ENCODE measurements at regions of chr14 and their contacts with region 1.

Region 1: GRCh38 chr14:61444215-61444768 is 122.9 kb downstream of the PRKCH start:
- DNase-seq: no peak
- ATAC-seq: peak; percentile 84
- H3K4me3 Mint-ChIP-seq: no peak overlapping the region
- H3K27ac Mint-ChIP-seq: no peak overlapping the region
- H3K4me1 Mint-ChIP-seq: peaks cover 23% of the 10 kb centered on the region
- H3K27me3 Mint-ChIP-seq: no peaks in the 10 kb centered on the region
- CTCF ChIP-seq: no peak

Region 2: GRCh38 chr14:61280526-61281185 is 163.6 kb before region 1 on chr14:
- CTCF ChIA-PET with region 1: no interaction called
- POLR2A ChIA-PET with region 1: no interaction called
- intact Hi-C with region 1: no loop called
- DNase-seq: peak; percentile 39
- ATAC-seq: peak; percentile 73
- H3K4me3 Mint-ChIP-seq: peak overlapping the region; percentile 80
- H3K27ac Mint-ChIP-seq: no peak overlapping the region
- H3K4me1 Mint-ChIP-seq: peaks cover 13% of the 10 kb centered on the region
- H3K27me3 Mint-ChIP-seq: peaks cover 42% of the 10 kb centered on the region
- CTCF ChIP-seq: no peak

Region 3: GRCh38 chr14:61296719-61297502 is 147.4 kb before region 1 on chr14:
- CTCF ChIA-PET with region 1: no interaction called
- POLR2A ChIA-PET with region 1: interaction called, 3 read pairs
- intact Hi-C with region 1: loop called (anchors 5 kb)
- DNase-seq: no peak
- ATAC-seq: no peak
- H3K4me3 Mint-ChIP-seq: no peak overlapping the region
- H3K27ac Mint-ChIP-seq: no peak overlapping the region
- H3K4me1 Mint-ChIP-seq: no peaks in the 10 kb centered on the region
- H3K27me3 Mint-ChIP-seq: no peaks in the 10 kb centered on the region
- CTCF ChIP-seq: no peak

Region 4: GRCh38 chr14:61342486-61342885 is 101.8 kb before region 1 on chr14:
- CTCF ChIA-PET with region 1: no interaction called
- POLR2A ChIA-PET with region 1: no interaction called
- intact Hi-C with region 1: no loop called
- DNase-seq: no peak
- ATAC-seq: peak; percentile 10
- H3K4me3 Mint-ChIP-seq: no peak overlapping the region
- H3K27ac Mint-ChIP-seq: no peak overlapping the region
- H3K4me1 Mint-ChIP-seq: peaks cover 21% of the 10 kb centered on the region
- H3K27me3 Mint-ChIP-seq: peaks cover 3% of the 10 kb centered on the region
- CTCF ChIP-seq: no peak

Region 5: DNA sequence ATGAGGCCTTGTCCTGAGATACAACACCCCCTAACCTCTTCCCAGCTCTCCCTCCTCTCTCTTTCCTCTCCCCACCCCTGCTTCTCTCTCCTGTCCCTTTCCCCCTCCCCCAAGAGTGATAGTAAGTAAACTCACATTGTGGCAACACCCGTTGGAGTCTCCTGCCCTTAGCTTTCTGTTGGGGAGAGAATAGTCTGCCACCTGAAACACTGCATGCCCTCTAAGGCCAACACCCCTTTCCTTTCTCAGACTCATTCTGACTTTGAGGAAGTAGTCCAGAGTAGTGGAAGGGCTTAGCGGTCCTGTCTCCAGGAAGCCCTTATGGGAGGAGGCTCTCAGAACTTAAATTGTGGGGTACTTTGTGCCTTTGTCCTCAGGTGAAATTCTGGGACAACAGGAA is 27.7 kb before region 1 on chr14:
- CTCF ChIA-PET with region 1: no interaction called
- POLR2A ChIA-PET with region 1: interaction called, 13 read pairs
- intact Hi-C with region 1: no loop called
- DNase-seq: no peak
- ATAC-seq: no peak
- H3K4me3 Mint-ChIP-seq: no peak overlapping the region
- H3K27ac Mint-ChIP-seq: no peak overlapping the region
- H3K4me1 Mint-ChIP-seq: peaks cover 5% of the 10 kb centered on the region
- H3K27me3 Mint-ChIP-seq: no peaks in the 10 kb centered on the region
- CTCF ChIP-seq: no peak

Region 6: GRCh38 chr14:61525293-61526011 is 81.2 kb after region 1 on chr14:
- CTCF ChIA-PET with region 1: no interaction called
- POLR2A ChIA-PET with region 1: no interaction called
- intact Hi-C with region 1: no loop called
- DNase-seq: no peak
- ATAC-seq: peak; percentile 69
- H3K4me3 Mint-ChIP-seq: no peak overlapping the region
- H3K27ac Mint-ChIP-seq: no peak overlapping the region
- H3K4me1 Mint-ChIP-seq: peaks cover 5% of the 10 kb centered on the region
- H3K27me3 Mint-ChIP-seq: no peaks in the 10 kb centered on the region
- CTCF ChIP-seq: no peak